Endothelial cell of umbilical vein (primary cell): ENCODE measurements at regions of chr14 and their contacts with region 1.

Region 1: GRCh38 chr14:22986508-22987054 is 4.2 kb upstream of the AJUBA start:
- DNase-seq: peak; percentile 86
- H3K4me3 ChIP-seq: no peak overlapping the region
- H3K27ac ChIP-seq: no peak overlapping the region
- H3K4me1 ChIP-seq: peaks cover 6% of the 10 kb centered on the region
- H3K27me3 ChIP-seq: no peaks in the 10 kb centered on the region
- CTCF ChIP-seq: peak; percentile 78 to 82
- POLR2A ChIP-seq: no peak

Region 2: DNA sequence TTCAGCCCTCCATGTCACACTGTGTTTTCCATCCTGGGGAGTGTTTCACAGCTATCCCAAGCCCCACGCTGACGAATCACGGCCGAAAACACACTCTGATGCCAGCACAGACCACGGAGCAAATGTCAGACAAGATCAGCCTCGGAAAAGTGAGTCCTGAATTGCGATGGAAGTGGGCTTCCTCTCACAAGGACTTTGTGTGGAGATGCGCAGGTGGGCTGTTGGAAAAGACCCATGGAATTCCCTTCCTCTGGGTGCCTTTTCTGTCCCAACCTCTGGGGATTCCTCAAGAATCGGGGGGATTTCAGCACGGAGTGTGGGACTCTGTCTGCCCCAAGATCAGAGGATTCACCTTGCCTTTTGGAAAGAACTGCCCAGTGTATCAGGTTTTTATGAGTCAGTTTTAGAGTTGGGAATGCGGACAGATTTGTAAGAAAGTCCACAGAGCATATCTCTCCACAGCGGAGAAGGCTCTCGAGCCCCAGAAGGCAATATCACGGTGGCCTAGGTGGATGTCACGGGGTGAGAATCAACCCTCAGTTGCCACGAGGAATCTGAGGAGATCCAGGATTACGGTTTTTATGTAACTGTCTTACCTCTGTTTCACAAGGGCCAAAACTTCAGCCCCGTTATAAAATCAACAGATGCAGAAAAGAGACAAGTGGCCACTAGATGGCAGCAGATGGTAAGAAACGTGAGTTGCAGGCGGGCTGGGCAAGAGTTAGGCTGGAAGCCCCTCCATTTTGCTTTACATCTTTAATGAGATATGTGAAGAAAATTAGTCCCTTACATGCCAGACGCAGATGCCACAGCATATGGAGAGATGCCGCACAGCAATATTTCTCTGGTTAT is 599.4 kb before region 1 on chr14:
- CTCF ChIA-PET with region 1: interaction called, 5 read pairs
- POLR2A ChIA-PET with region 1: no interaction called
- dilution Hi-C with region 1: no loop called
- intact Hi-C with region 1: loop called (anchors 1 kb)
- DNase-seq: peak; percentile 77
- H3K4me3 ChIP-seq: no peak overlapping the region
- H3K27ac ChIP-seq: no peak overlapping the region
- H3K4me1 ChIP-seq: peaks cover 6% of the 10 kb centered on the region
- H3K27me3 ChIP-seq: peaks cover 6 to 15% of the 10 kb centered on the region in 2 experiments
- CTCF ChIP-seq: peak; percentile 68 to 70
- POLR2A ChIP-seq: no peak

Region 3: GRCh38 chr14:22861651-22862050 is 124.9 kb before region 1 on chr14:
- CTCF ChIA-PET with region 1: no interaction called
- POLR2A ChIA-PET with region 1: no interaction called
- dilution Hi-C with region 1: no loop called
- intact Hi-C with region 1: no loop called
- DNase-seq: no peak
- H3K4me3 ChIP-seq: no peak overlapping the region
- H3K27ac ChIP-seq: no peak overlapping the region
- H3K4me1 ChIP-seq: no peaks in the 10 kb centered on the region
- H3K27me3 ChIP-seq: no peaks in the 10 kb centered on the region
- CTCF ChIP-seq: no peak
- POLR2A ChIP-seq: no peak

Region 4: DNA sequence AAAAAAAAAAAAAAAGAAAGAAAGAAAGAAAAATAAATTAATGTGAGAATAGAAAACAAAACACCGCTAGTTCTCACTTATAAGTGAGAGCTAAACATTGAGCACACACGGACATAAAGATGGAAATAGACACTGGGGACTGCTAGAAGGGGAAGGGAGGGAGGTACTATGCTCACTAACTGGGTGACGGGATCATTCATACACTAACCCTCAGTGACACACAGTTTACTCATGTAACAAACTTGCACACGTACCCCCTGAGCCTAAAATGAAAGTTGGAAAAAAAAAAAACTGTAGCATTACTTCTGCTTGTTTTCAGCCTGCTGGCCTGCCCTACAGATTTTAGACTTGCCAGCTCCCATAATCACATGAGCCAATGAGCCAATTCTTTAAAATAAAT is 46.9 kb before region 1 on chr14:
- CTCF ChIA-PET with region 1: interaction called, 8 read pairs
- POLR2A ChIA-PET with region 1: no interaction called
- dilution Hi-C with region 1: no loop called
- intact Hi-C with region 1: loop called (anchors 1 kb)
- DNase-seq: no peak
- H3K4me3 ChIP-seq: no peak overlapping the region
- H3K27ac ChIP-seq: no peak overlapping the region
- H3K4me1 ChIP-seq: no peaks in the 10 kb centered on the region
- H3K27me3 ChIP-seq: no peaks in the 10 kb centered on the region
- CTCF ChIP-seq: no peak
- POLR2A ChIP-seq: no peak

Region 5: DNA sequence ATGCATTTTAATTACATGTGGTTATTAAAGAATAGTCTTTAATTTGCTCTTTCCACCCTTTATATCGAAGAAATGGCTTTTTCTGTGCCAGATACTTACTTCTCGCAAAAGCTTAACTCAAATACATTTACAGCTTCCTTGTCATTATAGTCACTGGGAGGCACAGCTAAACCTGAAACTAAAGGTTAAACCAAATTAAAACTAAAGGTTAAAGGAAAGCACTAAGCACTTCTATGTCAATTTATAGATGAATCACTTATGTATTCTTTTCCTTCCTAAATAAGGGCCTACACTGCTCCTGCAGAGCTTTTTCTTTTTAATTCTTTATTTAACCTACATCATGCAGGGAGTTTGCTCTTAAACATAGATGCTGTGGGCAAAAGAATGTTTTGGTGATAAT is 14.3 kb after region 1 on chr14:
- CTCF ChIA-PET with region 1: interaction called, 148 read pairs
- POLR2A ChIA-PET with region 1: interaction called, 4 read pairs
- dilution Hi-C with region 1: no loop called
- intact Hi-C with region 1: loop called (anchors 2 kb)
- DNase-seq: no peak
- H3K4me3 ChIP-seq: no peak overlapping the region
- H3K27ac ChIP-seq: no peak overlapping the region
- H3K4me1 ChIP-seq: peaks cover 5% of the 10 kb centered on the region
- H3K27me3 ChIP-seq: no peaks in the 10 kb centered on the region
- CTCF ChIP-seq: no peak
- POLR2A ChIP-seq: no peak

Region 6: DNA sequence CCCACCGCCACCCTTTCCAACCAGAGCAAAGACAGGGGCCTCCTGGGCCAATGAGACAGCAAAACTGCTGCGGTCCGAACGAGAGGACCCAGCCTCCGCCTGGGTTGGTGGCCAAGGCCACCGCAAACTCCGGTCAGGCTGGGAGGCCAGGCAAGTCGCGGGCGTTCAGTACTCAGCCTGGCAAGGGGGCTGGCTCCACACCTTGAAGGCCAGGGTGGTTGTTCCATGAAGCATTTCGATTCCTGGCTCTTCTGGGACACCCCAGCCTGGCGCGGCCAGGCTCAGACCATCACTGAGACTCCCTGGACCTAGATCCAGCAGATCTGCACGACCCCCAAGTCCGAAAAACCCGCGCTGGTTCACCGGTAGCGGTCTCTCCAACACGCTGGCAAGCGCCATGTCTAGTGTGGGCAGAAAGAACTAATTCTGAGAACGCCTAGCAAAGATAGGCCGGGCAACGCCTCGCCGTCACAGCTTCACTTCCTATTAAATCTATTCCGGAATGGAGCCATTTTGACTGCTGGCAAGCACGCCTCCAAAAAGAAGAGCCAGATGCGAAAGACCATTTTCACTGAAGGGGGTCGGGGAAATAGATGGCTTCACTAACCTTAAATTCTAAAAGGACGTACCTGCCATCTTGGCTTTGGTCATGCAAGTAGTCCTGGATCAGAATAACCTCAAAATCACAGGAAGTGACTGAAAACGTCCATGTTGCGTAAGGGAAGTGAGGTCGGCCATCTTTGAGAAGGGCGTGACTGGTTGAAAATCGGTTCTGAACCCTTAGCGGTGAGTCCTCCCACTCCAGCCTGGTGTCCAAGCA is 48.1 kb after region 1 on chr14 and contains the start of gene PSMB5:
- CTCF ChIA-PET with region 1: interaction called, 23 read pairs
- POLR2A ChIA-PET with region 1: no interaction called
- dilution Hi-C with region 1: no loop called
- intact Hi-C with region 1: no loop called
- DNase-seq: peak; percentile 97
- H3K4me3 ChIP-seq: peak within 1 kb of the TSS; percentile 73 to 88 (median 84)
- H3K27ac ChIP-seq: peak within 1 kb of the TSS; percentile 88
- H3K4me1 ChIP-seq: peaks cover 12% of the 10 kb centered on the region
- H3K27me3 ChIP-seq: no peaks in the 10 kb centered on the region
- CTCF ChIP-seq: no peak
- POLR2A ChIP-seq: peak; percentile 89
- total RNA-seq, gene PSMB5: 214 and 236 TPM in 2 replicates

Region 7: DNA sequence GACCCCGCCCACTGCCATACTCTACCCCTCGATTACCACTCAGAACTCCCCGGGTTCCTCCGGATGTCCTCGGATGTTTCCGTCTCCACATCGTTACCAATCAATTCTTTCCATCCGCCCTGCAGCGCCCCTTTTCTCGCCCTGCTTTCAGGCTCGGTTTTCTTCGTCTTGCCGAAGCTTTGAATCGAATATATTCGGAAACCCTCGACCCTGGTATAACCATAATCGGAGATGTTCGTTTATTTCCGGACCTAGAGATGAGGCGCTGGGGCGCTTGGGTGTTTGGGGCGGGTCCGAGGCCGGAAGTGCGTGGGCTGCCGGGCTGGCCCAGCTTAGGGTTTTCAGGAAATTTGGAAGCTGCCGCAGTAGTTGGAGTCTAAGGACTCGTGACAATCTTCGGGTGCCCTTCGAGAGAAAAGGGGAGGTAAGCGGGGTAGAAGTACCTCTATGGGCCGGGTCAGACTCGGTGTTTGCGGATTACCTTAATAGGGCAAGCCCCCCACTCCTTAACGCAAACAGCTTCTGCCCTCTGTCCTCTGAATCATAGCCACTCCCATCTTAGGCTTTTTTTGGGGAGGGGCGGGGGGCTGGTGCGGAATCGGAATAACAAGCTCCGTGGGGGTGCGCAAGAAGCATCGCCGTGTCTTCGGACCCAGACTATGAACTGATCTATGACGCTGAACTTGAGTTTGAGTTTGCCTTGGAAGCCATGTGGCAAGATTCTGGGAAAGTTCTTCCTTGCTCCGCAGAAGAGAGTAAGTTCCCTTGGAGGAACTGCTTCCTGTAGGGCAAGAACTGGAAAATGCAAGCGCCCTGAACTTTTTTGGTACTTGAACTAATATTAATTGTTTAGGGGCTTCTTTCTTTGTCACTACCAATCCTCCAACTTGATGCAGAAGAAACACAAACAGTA is 108.9 kb after region 1 on chr14 and contains the start of gene C14orf119:
- CTCF ChIA-PET with region 1: interaction called, 16 read pairs
- POLR2A ChIA-PET with region 1: interaction called, 3 read pairs
- dilution Hi-C with region 1: no loop called
- intact Hi-C with region 1: no loop called
- DNase-seq: peak; percentile 100
- H3K4me3 ChIP-seq: peak within 1 kb of the TSS; percentile 87 to 99 (median 94)
- H3K27ac ChIP-seq: peak within 1 kb of the TSS; percentile 89
- H3K4me1 ChIP-seq: peaks cover 28% of the 10 kb centered on the region
- H3K27me3 ChIP-seq: no peaks in the 10 kb centered on the region
- CTCF ChIP-seq: no peak
- POLR2A ChIP-seq: peak; percentile 66
- total RNA-seq, gene C14orf119: 55.5 and 58.3 TPM in 2 replicates